Head of caudate nucleus (tissue), 42 donors: ENCODE measurements at regions of chr22 and their contacts with region 1.

Region 1: DNA sequence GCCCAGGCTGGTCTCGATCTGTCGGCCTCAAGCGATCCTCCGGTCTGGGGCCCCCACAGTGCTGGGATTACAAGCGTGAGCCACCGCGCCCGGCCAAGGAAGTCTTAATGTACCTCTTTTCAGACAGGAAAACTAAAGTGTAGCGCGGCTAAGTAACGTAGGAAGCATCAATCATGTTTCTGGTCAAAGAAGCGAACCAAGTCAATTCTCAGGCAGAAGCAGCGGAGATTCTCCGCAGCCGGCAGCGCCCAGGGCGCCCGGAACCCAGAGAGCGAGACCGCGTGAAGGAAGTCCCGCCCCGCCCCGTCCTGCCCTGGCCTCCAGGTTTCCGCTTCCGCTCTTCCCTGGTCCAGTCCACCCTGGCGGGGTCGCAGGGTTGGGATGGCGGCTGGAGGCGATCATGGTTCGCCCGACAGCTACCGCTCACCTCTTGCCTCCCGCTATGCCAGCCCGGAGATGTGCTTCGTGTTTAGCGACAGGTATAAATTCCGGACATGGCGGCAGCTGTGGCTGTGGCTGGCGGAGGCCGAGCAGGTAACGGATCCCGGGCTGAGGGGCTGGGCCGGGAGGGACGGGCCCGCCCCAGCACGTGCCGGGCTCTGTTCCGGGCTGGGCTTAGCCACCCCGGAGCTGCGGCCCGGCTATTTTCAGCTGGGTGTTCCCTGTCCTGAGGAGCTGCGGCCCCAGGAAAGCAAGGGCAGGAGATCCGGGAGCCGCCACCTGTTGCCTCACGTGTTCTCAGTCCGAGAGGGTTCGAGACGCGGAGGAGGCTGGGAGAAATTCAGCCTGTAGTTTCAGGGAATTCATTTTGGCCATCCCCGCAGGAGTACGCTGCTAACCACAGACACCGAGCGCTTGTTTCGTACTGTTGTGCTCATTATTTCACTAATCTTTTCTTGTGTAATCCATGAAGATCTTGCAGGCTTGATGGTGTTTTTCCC is at the start of gene ADSL:
- DNase-seq: peak; percentile 73 to 96 (median 90)

Region 2: DNA sequence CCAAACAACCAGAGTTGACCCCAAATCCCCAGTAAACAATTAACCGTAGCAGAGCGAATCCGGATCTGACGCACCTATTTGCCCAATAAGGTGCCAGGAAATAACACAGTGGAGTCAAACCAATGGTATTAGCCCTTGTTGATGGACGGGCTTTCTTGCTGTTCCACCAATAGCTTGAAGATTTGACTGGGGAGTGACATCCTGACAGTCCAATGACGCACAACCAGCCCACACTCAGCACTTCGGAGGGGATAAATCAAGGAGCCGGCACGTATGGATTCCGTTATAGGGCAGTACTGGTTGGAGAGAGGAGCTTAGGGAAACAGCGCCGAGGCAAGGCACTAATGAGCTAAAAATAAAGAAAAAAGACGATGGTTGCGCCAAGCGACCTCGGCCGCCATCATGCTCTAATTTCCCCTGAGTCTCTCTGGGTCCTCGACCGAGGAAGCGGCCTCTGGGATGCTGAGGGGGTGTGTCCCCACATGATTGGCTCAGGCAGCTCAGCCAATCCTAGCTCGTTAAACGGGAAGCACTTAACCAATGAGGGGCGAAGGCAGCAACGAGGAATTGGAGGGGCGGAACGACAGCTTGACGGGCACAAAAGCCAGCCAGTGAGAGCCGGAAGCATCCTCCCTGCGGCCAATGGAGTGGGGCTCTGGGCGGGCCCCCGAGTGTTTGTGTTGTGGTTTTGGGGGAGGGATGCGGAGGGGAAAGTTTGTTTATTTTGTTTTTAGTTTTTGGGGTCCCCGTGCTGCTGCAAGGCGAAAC is 302.2 kb before region 1 on chr22:
- intact Hi-C with region 1: loop called (anchors 10 kb)
- DNase-seq: peak; percentile 95 to 99 (median 98)

Region 3: GRCh38 chr22:40323681-40324171 is 22.7 kb before region 1 on chr22:
- intact Hi-C with region 1: no loop called
- DNase-seq: no peak